ENCODE measurements at regions of chr3 and their contacts with region 1.

Region 1: DNA sequence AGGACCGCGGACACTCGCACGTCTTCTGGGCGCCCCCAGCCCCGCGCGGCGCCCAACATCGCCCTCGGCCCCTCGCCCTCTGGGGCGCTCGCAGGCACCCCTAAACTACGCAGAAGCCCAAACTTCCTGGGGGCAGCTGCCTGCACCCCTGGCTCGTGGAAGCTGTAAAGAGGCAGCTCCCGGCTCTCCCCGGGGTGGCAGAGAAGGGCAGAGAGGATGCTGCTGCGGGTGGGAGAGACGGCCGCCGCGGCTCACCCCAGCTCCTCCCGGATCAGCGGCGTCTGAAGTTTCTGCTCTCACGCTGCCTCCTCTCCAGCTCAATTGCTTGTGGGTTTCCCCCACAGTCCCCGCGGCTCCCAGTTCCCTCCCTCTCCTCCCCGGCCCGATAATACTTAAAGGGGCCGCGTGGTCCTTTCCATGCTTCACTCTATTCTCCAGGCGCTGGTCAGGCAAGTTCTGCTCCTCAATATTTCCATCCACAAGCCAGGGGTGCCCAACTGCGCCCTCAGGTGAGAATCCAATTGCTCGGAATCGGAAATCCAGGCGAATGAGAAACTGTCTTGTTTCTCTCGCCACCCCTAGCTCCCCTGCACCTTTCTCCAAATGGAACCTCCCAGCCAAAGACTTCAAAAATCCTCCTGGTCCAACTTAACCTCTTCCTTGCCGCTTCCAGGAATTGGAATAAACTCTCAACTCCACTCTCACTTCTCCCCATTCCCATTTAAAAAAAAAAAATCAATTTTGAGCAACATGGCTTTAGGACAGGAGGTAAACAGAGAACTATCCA is 748.5 kb downstream of the ROBO1 start:
- DNase-seq: peak; percentile 67
- H3K4me3 ChIP-seq: peak overlapping the region; percentile 79
- CTCF ChIP-seq: no peak

Region 2: GRCh38 chr3:79005084-79005483 is 14.2 kb before region 1 on chr3:
- CTCF ChIA-PET with region 1: interaction called, 16 read pairs
- POLR2A ChIA-PET with region 1: interaction called, 16 read pairs
- DNase-seq: no peak
- H3K4me3 ChIP-seq: no peak overlapping the region
- CTCF ChIP-seq: no peak

Region 3: DNA sequence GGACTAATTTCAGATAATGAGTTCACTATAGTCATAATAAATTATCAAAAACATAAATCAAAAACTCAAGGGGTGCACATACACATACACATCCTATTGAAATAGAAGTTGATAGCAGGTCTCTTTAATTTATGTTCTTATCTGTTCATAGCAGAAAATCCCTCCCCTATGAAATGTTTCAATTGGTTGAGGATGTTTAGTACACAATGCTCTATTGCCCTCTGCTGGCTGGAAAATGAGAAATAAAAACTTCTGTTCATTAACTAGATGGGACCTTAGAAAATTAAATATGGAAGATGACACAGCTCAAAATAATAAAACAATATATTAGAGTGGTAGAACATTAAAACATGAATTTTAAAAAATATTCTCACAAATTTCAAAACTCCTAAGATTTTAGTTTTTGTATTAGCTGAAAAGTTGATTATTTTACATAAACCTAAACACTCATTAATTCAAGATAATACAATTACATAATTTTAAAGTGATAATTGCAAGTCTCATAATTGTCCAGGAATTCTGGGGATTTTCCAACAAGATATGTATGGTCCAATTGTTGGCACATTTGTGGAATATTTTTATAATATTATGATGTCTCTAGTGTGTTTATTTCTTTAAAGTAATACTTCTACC is 13.5 kb after region 1 on chr3:
- CTCF ChIA-PET with region 1: interaction called, 34 read pairs
- POLR2A ChIA-PET with region 1: interaction called, 7 read pairs
- DNase-seq: no peak
- H3K4me3 ChIP-seq: no peak overlapping the region
- CTCF ChIP-seq: peak; percentile 40